Activated T-helper 2 cell treated with anti-CD3 and anti-CD28 coated beads, Interferon-gamma antibody, Interleukin-2, Interleukin-4, amounts not matched to agents 10 μg/mL and 5 μg/mL and 100 μg/mL, durations not matched to agents 14 hours and 24 hours and 36 hours (primary cell): ENCODE measurements at regions of chr9 and their contacts with region 1.

Region 1: GRCh38 chr9:115035841-115036612 is 81.9 kb downstream of the TNC start:
- DNase-seq: peak; percentile 14
- H3K4me3 Mint-ChIP-seq: peak overlapping the region; percentile 41
- H3K27ac Mint-ChIP-seq: peak overlapping the region; percentile 89
- H3K4me1 Mint-ChIP-seq: peaks cover 45% of the 10 kb centered on the region
- H3K27me3 Mint-ChIP-seq: peaks cover 8% of the 10 kb centered on the region

Region 2: GRCh38 chr9:114988962-114989599 is 46.9 kb before region 1 on chr9:
- intact Hi-C with region 1: loop called (anchors 2 kb)
- DNase-seq: no peak
- H3K4me3 Mint-ChIP-seq: no peak overlapping the region
- H3K27ac Mint-ChIP-seq: peak overlapping the region; percentile 97
- H3K4me1 Mint-ChIP-seq: peaks cover 59% of the 10 kb centered on the region
- H3K27me3 Mint-ChIP-seq: no peaks in the 10 kb centered on the region

Region 3: DNA sequence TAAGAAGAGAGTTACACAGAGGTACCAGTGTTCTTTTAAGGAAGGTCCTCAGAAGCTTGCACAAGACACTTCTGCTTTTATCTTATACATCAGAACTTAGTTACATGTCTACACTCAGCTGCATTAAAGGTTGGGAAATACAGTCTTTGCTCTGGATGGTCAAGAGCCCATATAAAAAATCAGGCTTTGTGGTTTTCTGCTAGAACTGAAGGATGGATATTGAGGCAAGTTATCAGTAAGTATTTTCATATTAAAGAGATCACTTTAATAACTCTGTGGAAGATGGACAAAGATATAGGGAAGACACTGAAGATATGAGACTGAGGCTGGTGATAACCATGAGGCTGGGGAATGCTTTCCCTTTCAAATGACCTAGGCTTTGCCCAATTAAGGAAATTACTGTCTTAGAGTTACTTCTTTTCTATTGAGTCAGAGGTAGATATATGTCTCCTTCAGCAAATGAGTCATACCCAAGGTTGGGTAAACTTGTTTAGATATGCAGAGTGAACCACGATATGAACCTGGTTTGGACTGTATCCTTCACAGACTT is 169.0 kb after region 1 on chr9:
- intact Hi-C with region 1: loop called (anchors 2 kb)
- DNase-seq: no peak
- H3K4me3 Mint-ChIP-seq: no peak overlapping the region
- H3K27ac Mint-ChIP-seq: no peak overlapping the region
- H3K4me1 Mint-ChIP-seq: peaks cover 40% of the 10 kb centered on the region
- H3K27me3 Mint-ChIP-seq: peaks cover 17% of the 10 kb centered on the region

Region 4: GRCh38 chr9:115680231-115680630 is 644.2 kb after region 1 on chr9:
- intact Hi-C with region 1: no loop called
- DNase-seq: no peak
- H3K4me3 Mint-ChIP-seq: no peak overlapping the region
- H3K27ac Mint-ChIP-seq: no peak overlapping the region
- H3K4me1 Mint-ChIP-seq: no peaks in the 10 kb centered on the region
- H3K27me3 Mint-ChIP-seq: no peaks in the 10 kb centered on the region